ENCODE measurements at regions of chr5 and their contacts with region 1.

Region 1: GRCh38 chr5:179494774-179495526 is 55.4 kb upstream of the RUFY1 start:
- DNase-seq: no peak
- H3K4me3 ChIP-seq: no peak overlapping the region
- CTCF ChIP-seq: no peak
- POLR2A ChIP-seq: no peak

Region 2: GRCh38 chr5:179166886-179167841 is 327.8 kb before region 1 on chr5:
- intact Hi-C with region 1: loop called (anchors 5 kb)
- DNase-seq: no peak
- H3K4me3 ChIP-seq: no peak overlapping the region
- CTCF ChIP-seq: no peak
- POLR2A ChIP-seq: no peak

Region 3: GRCh38 chr5:179275941-179276837 is 218.8 kb before region 1 on chr5:
- intact Hi-C with region 1: no loop called
- DNase-seq: peak; percentile 71 to 96
- H3K4me3 ChIP-seq: no peak overlapping the region
- CTCF ChIP-seq: no peak
- POLR2A ChIP-seq: no peak

Region 4: DNA sequence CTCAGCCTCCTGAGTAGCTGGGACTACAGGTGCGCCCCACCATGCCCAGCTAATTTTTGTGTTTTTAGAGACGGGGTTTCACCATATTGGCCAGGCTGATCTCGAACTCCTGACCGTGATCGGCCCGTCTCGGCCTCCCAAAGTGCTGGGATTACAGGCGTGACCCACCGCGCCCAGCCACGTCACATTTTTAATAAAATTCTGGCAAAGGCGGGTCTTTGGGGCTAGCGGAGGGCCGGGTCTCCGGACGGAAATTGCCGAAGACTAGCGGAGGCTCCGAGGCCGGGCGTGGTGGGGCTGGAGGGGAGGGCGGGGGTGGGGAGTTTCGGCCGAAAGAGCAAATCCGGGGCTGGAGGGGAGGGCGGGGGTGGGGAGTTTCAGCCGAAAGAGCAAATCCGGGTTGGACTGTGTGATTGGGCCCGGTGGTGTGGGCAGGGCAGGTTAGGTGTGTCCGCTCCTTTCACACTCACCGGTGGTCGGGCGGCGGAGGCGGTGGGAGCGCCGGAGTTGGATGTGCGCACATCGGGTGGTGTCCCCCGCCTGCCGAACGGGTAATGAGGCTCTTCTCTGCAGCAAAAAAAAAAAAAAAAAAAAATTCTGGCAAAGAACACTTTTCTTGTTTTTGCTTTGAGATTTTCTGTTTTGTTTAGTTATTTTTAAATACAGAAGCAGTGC is 82.5 kb after region 1 on chr5:
- intact Hi-C with region 1: no loop called
- DNase-seq: no peak
- H3K4me3 ChIP-seq: no peak overlapping the region
- CTCF ChIP-seq: no peak
- POLR2A ChIP-seq: no peak

Measured in lower leg skin (tissue), 4 donors.